AG04449 (cell line): ENCODE measurements at regions of chrX and their contacts with region 1.

Region 1: GRCh38 chrX:134782796-134783195 is 124.5 kb upstream of the PLAC1 start:
- DNase-seq: no peak
- H3K4me3 ChIP-seq: no peak overlapping the region
- CTCF ChIP-seq: peak; percentile 27

Region 2: DNA sequence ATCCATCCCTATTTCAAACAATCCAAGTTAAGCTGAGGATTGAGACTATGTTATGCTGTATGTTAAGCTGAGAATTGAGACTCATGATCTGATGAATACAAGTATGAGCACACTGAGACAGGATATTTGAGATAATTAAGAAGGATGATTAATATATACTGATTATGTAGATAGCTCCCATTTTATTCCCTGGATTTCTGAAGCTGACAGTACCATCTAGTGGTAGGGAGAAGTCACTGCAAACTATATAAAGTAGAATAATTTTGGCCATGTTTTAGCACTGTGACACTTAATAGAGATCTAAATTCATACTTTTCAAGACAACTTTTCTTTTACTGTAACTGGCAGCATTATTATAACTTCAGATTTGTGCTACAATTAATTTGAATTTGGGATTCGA is 386.6 kb before region 1 on chrX:
- CTCF ChIA-PET with region 1: no interaction called
- POLR2A ChIA-PET with region 1: no interaction called
- DNase-seq: no peak
- H3K4me3 ChIP-seq: no peak overlapping the region
- CTCF ChIP-seq: peak; percentile 39

Region 3: DNA sequence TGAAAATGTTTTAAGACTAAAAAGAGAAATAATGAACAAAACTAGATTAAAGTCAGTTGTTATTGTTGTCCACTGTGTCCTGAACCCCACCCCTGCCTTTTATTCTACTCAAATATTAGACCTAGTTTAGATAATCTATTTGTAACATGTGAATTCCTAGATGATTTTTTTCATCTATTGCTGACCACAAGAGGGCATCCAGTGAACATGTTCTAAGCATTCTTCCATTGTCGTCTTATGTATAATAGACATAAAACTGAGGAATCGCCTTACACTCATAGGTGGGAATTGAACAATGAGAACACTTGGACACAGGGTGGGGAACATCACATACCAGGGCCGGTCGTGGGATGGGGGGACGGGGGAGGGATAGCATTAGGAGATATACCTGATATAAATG is 359.2 kb before region 1 on chrX:
- CTCF ChIA-PET with region 1: interaction called, 12 read pairs
- POLR2A ChIA-PET with region 1: no interaction called
- DNase-seq: no peak
- H3K4me3 ChIP-seq: no peak overlapping the region
- CTCF ChIP-seq: peak; percentile 26

Region 4: GRCh38 chrX:134484039-134484438 is 298.8 kb before region 1 on chrX:
- CTCF ChIA-PET with region 1: interaction called, 39 read pairs
- POLR2A ChIA-PET with region 1: no interaction called
- DNase-seq: peak; percentile 23
- H3K4me3 ChIP-seq: no peak overlapping the region
- CTCF ChIP-seq: peak; percentile 4

Region 5: DNA sequence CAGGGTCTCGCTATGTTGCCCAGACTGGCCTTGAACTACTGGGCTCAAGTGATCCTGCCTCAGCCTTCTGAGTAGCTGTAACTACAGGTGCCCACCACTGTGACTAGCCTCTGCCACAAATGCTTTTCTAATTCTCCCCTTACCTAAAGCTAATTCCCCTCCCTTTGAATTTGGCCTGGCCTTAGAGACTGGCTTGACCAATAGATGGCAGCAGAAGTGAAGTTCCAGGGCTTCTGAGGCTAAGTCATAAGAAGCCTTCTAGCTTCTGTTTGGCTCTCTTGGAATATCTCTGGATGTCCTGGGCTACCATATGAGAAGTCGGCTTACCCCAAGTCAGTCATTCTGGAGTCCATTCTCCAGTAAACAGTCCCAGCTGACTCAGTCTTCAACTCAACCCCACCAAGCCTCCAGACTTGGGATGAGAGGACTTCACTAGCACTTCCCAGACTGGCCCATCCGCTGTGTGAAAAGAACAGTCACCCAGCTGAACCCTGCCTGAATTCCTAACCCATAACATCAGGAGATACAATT is 261.9 kb before region 1 on chrX:
- CTCF ChIA-PET with region 1: interaction called, 53 read pairs
- POLR2A ChIA-PET with region 1: no interaction called
- DNase-seq: no peak
- H3K4me3 ChIP-seq: no peak overlapping the region
- CTCF ChIP-seq: peak; percentile 58